Common myeloid progenitor, CD34-positive (primary cell): ENCODE measurements at regions of chr6 and their contacts with region 1.

Region 1: DNA sequence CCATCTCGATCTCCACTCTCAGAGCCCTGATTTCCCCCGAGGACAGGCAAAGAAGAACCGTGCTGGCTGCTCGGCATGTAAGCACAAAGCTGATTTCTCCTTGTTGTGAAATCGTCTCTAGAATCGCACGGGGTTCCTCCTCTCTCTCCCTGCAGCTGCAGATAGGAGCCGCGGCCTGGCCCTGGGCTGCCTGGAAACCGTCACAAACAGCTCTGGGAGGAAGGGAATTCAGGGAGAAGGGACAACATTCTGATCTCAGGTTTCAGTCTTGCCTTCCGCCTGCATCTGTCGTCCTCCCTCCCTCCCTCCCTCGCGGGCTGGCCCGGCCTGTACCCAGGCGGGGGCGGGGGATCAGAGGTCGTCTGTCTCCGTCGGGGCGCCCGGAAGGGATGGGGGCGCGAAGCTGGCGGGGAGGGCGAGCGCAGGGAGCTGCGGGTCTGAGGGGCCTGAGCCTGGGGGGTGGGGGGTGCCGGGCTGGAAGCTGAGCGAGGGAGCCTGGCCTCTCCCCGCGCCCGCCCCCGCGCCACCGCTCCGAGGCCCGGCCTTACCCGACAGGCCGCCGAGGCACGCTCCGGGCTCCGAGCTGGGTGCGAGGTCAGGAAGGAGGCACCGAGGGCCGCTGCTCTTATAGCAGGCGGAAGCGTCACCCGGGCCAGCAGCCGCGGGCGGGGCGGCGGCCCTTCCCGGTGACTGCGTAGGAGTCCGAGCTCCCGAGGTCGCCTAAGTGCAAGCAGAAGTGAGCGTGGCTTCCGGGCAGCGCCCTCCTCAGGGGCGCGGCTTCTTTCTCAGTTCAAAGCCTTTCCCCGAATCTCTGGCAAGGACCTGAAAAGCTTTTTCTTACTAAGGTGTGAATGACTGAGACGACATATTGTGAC is at the start of gene SERPINB1:
- DNase-seq: peak; percentile 86 to 94 (median 91)
- H3K4me3 ChIP-seq: peak within 1 kb of the TSS; percentile 59 to 97 (median 93)
- H3K27ac ChIP-seq: peak within 1 kb of the TSS; percentile 75 to 91
- H3K4me1 ChIP-seq: peaks cover 39 to 61% (median 56%) of the 10 kb centered on the region in 4 experiments
- H3K27me3 ChIP-seq: no peaks in the 10 kb centered on the region

Region 2: DNA sequence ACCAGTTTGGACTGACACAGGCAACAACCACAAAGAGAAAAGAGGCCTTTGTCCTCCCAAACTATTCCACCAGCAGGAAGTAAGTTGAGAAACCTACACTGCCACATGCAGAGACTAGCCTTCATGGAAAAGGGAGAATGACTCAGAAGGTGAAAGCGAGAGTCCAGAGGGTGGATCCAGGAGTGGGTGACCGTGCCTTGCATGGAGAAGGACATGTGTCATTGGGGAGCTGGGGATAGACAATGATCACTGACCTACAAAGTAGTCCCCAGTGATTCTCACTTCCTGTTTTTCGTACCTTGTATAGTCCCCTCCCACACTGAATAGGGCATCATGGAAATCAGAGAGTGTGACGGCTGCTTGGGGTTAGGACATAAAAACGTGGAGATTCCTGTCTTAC is 182.7 kb before region 1 on chr6:
- CTCF ChIA-PET with region 1: no interaction called
- POLR2A ChIA-PET with region 1: no interaction called
- DNase-seq: no peak
- H3K4me3 ChIP-seq: no peak overlapping the region
- H3K27ac ChIP-seq: no peak overlapping the region
- H3K4me1 ChIP-seq: peaks cover 0 to 6% (median 3%) of the 10 kb centered on the region in 4 experiments
- H3K27me3 ChIP-seq: no peaks in the 10 kb centered on the region

Region 3: DNA sequence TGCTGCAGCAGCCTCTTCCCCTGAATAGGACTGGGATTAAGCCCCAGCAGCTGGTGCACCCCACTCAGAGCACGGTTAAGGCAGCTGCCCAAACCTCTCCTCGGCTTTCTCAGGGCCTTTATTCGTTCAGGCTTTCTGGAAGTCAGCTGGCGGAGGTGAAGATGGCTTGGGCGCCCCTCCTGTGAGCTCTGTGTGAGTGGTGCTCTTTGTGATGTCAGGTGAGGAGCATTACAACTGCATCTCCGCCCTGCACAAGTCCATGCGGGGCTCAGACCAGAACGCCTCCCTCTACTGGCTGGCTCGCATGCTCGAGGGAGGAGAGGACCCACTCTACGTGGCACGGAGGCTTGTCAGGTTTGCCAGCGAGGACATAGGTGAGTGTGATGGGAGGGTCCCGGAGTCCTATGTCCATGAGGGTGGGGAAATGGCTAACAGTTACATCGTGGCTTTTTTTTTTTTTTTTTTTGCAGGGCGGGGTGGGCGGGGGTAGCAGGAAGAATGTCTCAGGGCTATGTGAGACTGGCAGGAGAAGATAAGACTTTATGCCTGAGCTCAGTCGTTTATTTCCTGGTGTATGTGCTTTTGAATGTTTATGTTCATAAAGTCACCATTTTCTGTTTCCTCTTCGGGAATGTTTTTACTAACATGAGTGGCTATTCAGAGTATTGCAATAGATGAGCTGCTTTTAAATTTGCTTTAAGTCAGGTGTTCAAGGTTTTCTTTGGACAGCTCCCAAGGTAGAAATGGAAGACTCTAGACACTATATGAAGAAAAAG is 58.1 kb before region 1 on chr6:
- CTCF ChIA-PET with region 1: interaction called, 116 read pairs
- POLR2A ChIA-PET with region 1: interaction called, 5 read pairs
- DNase-seq: peak; percentile 75 to 95 (median 90)
- H3K4me3 ChIP-seq: peak overlapping the region in 3 of 7 experiments; percentile 30 to 49 (median 46)
- H3K27ac ChIP-seq: peak overlapping the region; percentile 71 to 78
- H3K4me1 ChIP-seq: peaks cover 15 to 55% (median 39%) of the 10 kb centered on the region in 4 experiments
- H3K27me3 ChIP-seq: no peaks in the 10 kb centered on the region

Region 4: GRCh38 chr6:2799936-2800527 is 41.5 kb before region 1 on chr6:
- CTCF ChIA-PET with region 1: interaction called, 31 read pairs
- POLR2A ChIA-PET with region 1: interaction called, 11 read pairs
- DNase-seq: peak; percentile 45 to 79 (median 66)
- H3K4me3 ChIP-seq: no peak overlapping the region
- H3K27ac ChIP-seq: peak overlapping the region in 1 of 2 experiments; percentile 57
- H3K4me1 ChIP-seq: peaks cover 14 to 61% (median 56%) of the 10 kb centered on the region in 4 experiments
- H3K27me3 ChIP-seq: no peaks in the 10 kb centered on the region

Region 5: DNA sequence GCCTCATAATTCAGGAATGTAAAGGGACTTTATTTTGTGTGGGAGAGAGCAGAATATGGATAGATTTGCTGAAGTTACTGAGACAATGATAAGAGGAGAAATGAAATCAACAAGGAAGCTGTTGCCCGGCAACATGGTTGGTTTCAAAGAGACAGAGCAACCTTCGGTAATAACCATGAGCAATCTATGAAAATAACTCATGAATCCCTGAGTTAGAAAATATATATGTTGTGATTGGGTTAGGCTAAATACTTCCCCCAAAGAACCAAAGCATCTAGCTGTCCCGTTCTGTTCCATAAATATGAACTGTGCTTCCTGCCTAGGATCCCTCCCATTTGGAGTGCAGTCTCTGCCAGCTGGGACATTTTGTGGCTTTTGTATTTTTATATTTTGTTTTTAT is 22.9 kb before region 1 on chr6:
- CTCF ChIA-PET with region 1: interaction called, 66 read pairs
- POLR2A ChIA-PET with region 1: interaction called, 14 read pairs
- DNase-seq: peak; percentile 45 to 81 (median 74)
- H3K4me3 ChIP-seq: peak overlapping the region in 3 of 7 experiments; percentile 1 to 38 (median 21)
- H3K27ac ChIP-seq: peak overlapping the region; percentile 92 to 96
- H3K4me1 ChIP-seq: peaks cover 41 to 68% (median 50%) of the 10 kb centered on the region in 4 experiments
- H3K27me3 ChIP-seq: no peaks in the 10 kb centered on the region

Region 6: DNA sequence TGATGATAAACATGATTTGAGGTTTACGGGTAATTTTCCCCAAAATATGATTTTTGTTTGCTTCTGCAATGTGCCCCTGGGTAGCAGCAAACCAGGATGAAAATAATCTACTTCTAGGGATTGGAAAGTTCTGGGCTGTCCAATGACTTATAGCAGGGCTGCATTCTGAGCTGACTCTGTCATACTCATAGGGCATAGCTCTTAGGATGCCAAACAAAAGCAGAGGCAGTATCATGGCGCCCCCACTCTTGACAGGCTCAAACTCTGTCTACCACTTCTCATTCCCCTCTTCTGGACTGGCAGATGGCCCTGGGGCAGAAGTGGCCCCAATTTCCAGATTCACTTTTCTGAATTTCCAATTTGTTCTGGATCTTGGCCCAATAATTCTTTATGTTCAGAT is 10.1 kb before region 1 on chr6:
- CTCF ChIA-PET with region 1: interaction called, 66 read pairs
- POLR2A ChIA-PET with region 1: interaction called, 20 read pairs
- DNase-seq: no peak
- H3K4me3 ChIP-seq: no peak overlapping the region
- H3K27ac ChIP-seq: peak overlapping the region in 1 of 2 experiments; percentile 15
- H3K4me1 ChIP-seq: peaks cover 5 to 34% (median 11%) of the 10 kb centered on the region in 4 experiments
- H3K27me3 ChIP-seq: no peaks in the 10 kb centered on the region

Region 7: GRCh38 chr6:2931970-2932748 is 90.7 kb after region 1 on chr6:
- CTCF ChIA-PET with region 1: interaction called, 208 read pairs
- POLR2A ChIA-PET with region 1: no interaction called
- DNase-seq: peak; percentile 84 to 91 (median 90)
- H3K4me3 ChIP-seq: peak overlapping the region in 4 of 7 experiments; percentile 21 to 67 (median 52)
- H3K27ac ChIP-seq: no peak overlapping the region
- H3K4me1 ChIP-seq: peaks cover 0 to 21% (median 10%) of the 10 kb centered on the region in 4 experiments
- H3K27me3 ChIP-seq: no peaks in the 10 kb centered on the region

Region 8: GRCh38 chr6:2940010-2940850 is 98.7 kb after region 1 on chr6:
- CTCF ChIA-PET with region 1: interaction called, 208 read pairs
- POLR2A ChIA-PET with region 1: no interaction called
- DNase-seq: peak in 2 of 3 donors; percentile 55 to 56
- H3K4me3 ChIP-seq: peak overlapping the region in 2 of 7 experiments; percentile 26 to 33
- H3K27ac ChIP-seq: no peak overlapping the region
- H3K4me1 ChIP-seq: peaks cover 11 to 48% (median 40%) of the 10 kb centered on the region in 4 experiments
- H3K27me3 ChIP-seq: no peaks in the 10 kb centered on the region

Region 9: GRCh38 chr6:3009930-3010329 is 168.4 kb after region 1 on chr6:
- CTCF ChIA-PET with region 1: no interaction called
- POLR2A ChIA-PET with region 1: no interaction called
- DNase-seq: no peak
- H3K4me3 ChIP-seq: no peak overlapping the region
- H3K27ac ChIP-seq: no peak overlapping the region
- H3K4me1 ChIP-seq: peaks cover 0 to 13% (median 5%) of the 10 kb centered on the region in 4 experiments
- H3K27me3 ChIP-seq: no peaks in the 10 kb centered on the region